K562 (cell line): ENCODE measurements at regions of chr12 and their contacts with region 1.

Region 1: GRCh38 chr12:62123721-62124203 is 136.4 kb upstream of the USP15 start:
- DNase-seq: peak; percentile 32 to 61 (median 33)
- ATAC-seq: peak; percentile 88
- H3K4me3 ChIP-seq: no peak overlapping the region
- H3K27ac ChIP-seq: no peak overlapping the region
- H3K4me1 ChIP-seq: no peaks in the 10 kb centered on the region
- H3K27me3 ChIP-seq: no peaks in the 10 kb centered on the region
- CTCF ChIP-seq: peak; percentile 45 to 73 (median 71); a peak in 5 of 6 replicates
- EP300 ChIP-seq: no peak
- POLR2A ChIP-seq: no peak
- RAD21 ChIP-seq: peak; percentile 57 to 73

Region 2: GRCh38 chr12:62106547-62107185 is 17.1 kb before region 1 on chr12:
- CTCF ChIA-PET with region 1: no interaction called
- POLR2A ChIA-PET with region 1: no interaction called
- in situ Hi-C with region 1: no loop called
- intact Hi-C with region 1: no loop called
- DNase-seq: no peak
- ATAC-seq: no peak
- H3K4me3 ChIP-seq: no peak overlapping the region
- H3K27ac ChIP-seq: no peak overlapping the region
- H3K4me1 ChIP-seq: no peaks in the 10 kb centered on the region
- H3K27me3 ChIP-seq: peaks cover 0 to 3% of the 10 kb centered on the region in 2 experiments; a peak in 1 of 5 replicates
- CTCF ChIP-seq: no peak
- EP300 ChIP-seq: no peak
- POLR2A ChIP-seq: no peak
- RAD21 ChIP-seq: no peak

Region 3: DNA sequence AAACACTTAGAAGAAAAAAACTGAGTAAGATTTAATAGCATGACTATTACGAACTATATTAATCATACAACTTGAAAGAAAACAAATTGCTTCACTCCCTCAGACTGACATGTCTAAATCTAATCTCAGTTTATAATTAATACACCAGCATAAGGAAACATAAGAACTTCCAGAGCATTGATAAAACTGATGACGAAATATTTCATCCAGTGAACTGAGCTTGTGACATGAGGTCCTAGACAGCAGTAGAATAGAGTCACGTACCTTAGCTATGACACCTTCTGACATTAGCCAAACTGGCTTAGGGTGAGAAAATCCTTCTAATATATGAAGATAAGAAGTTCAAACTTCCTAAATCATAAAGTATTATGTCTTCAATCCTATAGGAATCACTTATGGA is 57.7 kb after region 1 on chr12:
- CTCF ChIA-PET with region 1: no interaction called
- POLR2A ChIA-PET with region 1: no interaction called
- in situ Hi-C with region 1: no loop called
- intact Hi-C with region 1: no loop called
- DNase-seq: no peak
- ATAC-seq: no peak
- H3K4me3 ChIP-seq: no peak overlapping the region
- H3K27ac ChIP-seq: no peak overlapping the region
- H3K4me1 ChIP-seq: no peaks in the 10 kb centered on the region
- H3K27me3 ChIP-seq: no peaks in the 10 kb centered on the region
- CTCF ChIP-seq: no peak
- EP300 ChIP-seq: no peak
- POLR2A ChIP-seq: no peak
- RAD21 ChIP-seq: no peak

Region 4: DNA sequence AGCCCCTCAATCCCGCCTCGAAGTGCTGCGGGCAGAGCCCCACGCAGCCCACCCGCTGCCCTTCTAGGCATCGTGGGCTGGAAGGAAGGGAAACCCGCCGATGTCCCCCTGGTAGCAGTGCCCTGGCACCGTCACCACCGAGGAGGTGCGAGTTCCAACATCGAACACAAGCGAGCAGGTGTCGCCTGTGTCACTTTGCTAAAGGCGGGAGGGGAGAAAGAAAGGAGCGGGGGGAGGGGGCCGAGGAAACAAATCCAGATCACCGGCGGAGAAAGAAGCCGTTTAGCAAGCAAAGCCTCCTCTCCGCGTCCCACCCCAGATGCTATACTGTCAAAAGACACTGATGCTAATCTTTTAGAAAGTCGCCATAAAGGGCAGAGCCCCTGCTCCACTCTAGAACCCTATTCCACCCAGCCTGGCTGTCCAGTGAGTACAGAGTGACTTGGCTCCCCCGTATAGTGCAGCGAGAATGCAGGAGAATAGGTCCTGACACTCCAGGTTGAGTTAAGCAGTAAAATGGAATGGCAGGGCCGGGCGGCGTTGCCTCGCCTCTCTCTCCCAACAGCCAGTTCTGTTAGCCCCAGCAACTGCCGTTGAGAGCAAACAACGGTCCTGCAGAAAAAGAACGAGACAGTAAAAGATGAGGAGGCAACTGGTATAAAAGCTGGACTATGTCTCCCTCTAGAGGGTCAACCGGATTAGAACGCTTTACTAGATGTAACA is 68.6 kb after region 1 on chr12:
- CTCF ChIA-PET with region 1: no interaction called
- POLR2A ChIA-PET with region 1: no interaction called
- in situ Hi-C with region 1: no loop called
- intact Hi-C with region 1: loop called (anchors 5 kb)
- DNase-seq: peak; percentile 50 to 74 (median 62)
- ATAC-seq: peak; percentile 99
- H3K4me3 ChIP-seq: no peak overlapping the region
- H3K27ac ChIP-seq: no peak overlapping the region
- H3K4me1 ChIP-seq: peaks cover 0 to 18% of the 10 kb centered on the region in 2 experiments; a peak in 2 of 5 replicates
- H3K27me3 ChIP-seq: peaks cover 0 to 8% of the 10 kb centered on the region in 2 experiments; a peak in 2 of 5 replicates
- CTCF ChIP-seq: peak; percentile 30 to 83 (median 73); a peak in 5 of 6 replicates
- EP300 ChIP-seq: peak; percentile 10; the same call in 1 of the 2 replicates
- POLR2A ChIP-seq: no peak
- RAD21 ChIP-seq: peak; percentile 81 to 84